Tibial artery (tissue), 4 donors: ENCODE measurements at regions of chr13 and their contacts with region 1.

Region 1: DNA sequence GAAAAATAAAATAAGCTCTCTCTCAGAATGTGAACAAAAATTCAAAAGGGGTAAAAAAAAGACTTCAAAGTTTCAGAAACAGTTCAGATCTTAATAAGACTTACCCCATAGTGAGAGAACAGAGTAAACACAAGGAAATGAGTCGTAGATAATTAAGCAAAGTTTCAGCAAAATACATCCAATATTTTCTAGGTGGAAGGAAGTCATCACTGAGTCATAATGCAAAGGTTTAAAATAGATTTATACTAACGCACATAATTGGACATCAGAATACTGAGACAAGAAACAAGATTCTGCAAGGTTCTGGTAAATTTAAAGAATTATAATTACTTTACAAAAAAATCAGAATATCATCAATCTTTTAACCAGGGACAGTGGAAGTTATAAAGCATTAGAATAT is 1370.7 kb upstream of the ATXN8OS start:
- DNase-seq: no peak
- H3K4me3 ChIP-seq: no peak overlapping the region
- H3K27ac ChIP-seq: no peak overlapping the region
- H3K4me1 ChIP-seq: no peaks in the 10 kb centered on the region
- H3K27me3 ChIP-seq: no peaks in the 10 kb centered on the region
- CTCF ChIP-seq: no peak

Region 2: DNA sequence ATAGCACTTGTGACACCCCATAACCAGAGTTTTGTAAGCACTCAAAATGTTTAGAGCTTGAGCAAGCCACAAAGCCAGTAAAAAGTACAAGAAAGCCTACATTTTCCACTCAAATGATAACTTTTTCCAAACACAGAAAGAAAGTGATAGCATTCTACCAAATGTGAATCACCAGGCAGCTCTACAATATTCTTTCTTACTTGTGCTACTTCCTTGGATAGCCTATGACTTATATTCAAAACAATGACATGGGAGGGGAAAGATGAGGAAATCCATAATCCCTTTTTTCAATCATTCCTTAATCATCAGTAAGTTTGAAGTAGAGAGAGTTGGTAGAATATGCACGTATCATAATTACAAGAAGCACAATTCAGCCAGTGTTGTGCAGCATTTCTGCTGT is 856.0 kb before region 1 on chr13:
- intact Hi-C with region 1: no loop called
- DNase-seq: no peak
- H3K4me3 ChIP-seq: no peak overlapping the region
- H3K27ac ChIP-seq: no peak overlapping the region
- H3K4me1 ChIP-seq: no peaks in the 10 kb centered on the region
- H3K27me3 ChIP-seq: no peaks in the 10 kb centered on the region
- CTCF ChIP-seq: no peak

Region 3: GRCh38 chr13:68749801-68750200 is 12.8 kb after region 1 on chr13:
- intact Hi-C with region 1: loop called (anchors 2 kb)
- DNase-seq: no peak
- H3K4me3 ChIP-seq: no peak overlapping the region
- H3K27ac ChIP-seq: no peak overlapping the region
- H3K4me1 ChIP-seq: no peaks in the 10 kb centered on the region
- H3K27me3 ChIP-seq: no peaks in the 10 kb centered on the region
- CTCF ChIP-seq: no peak